ENCODE measurements at regions of chr16 and their contacts with region 1.

Region 1: GRCh38 chr16:81595604-81596292 is 151.1 kb downstream of the CMIP start:
- DNase-seq: no peak
- H3K4me3 Mint-ChIP-seq: no peak overlapping the region
- H3K27ac Mint-ChIP-seq: peak overlapping the region; percentile 87
- H3K4me1 Mint-ChIP-seq: peaks cover 35% of the 10 kb centered on the region
- H3K27me3 Mint-ChIP-seq: no peaks in the 10 kb centered on the region

Region 2: GRCh38 chr16:81521151-81521626 is 74.6 kb before region 1 on chr16:
- intact Hi-C with region 1: loop called (anchors 2 kb)
- DNase-seq: peak; percentile 81
- H3K4me3 Mint-ChIP-seq: peak overlapping the region; percentile 4
- H3K27ac Mint-ChIP-seq: peak overlapping the region; percentile 79
- H3K4me1 Mint-ChIP-seq: peaks cover 60% of the 10 kb centered on the region
- H3K27me3 Mint-ChIP-seq: no peaks in the 10 kb centered on the region

Region 3: GRCh38 chr16:81567987-81568748 is 27.6 kb before region 1 on chr16:
- intact Hi-C with region 1: loop called (anchors 1 kb)
- DNase-seq: no peak
- H3K4me3 Mint-ChIP-seq: peak overlapping the region; percentile 27
- H3K27ac Mint-ChIP-seq: peak overlapping the region; percentile 81
- H3K4me1 Mint-ChIP-seq: peaks cover 20% of the 10 kb centered on the region
- H3K27me3 Mint-ChIP-seq: no peaks in the 10 kb centered on the region

Region 4: DNA sequence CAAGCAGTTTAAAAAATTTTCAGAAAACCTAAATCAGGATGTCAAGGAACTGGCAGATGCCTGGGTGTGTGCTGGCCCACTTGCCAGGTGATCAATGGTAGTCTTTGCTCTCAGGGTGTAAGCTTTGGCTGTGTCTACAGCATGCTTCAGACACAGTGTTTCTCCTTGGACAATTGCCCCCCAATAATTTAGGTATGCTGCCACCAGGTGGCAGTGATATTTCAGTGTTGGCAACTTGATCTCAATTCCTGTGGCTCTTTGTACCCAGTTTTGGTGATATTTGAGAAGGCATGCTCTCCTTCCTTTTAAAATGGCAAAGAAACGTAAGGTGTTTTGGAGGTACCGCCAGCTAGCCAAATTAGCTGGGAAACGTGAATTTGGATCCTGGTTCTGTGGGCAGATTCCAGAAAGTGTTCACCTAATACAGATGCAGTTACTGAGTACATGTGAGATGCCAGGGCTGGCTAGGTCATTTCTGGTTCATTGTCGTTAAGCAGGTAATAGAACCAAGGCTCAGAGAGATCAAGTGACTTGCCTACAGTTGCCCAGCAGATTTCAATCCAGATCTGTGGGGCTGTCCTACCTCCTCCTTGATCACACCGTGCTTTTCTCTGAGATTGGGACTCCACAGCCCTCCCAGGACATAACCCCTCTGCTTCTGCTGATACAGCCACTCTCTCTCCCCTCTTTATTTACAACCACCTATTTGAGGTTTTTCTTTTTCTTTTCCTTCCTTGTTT is 27.8 kb after region 1 on chr16:
- intact Hi-C with region 1: loop called (anchors 1 kb)
- DNase-seq: peak; percentile 42
- H3K4me3 Mint-ChIP-seq: no peak overlapping the region
- H3K27ac Mint-ChIP-seq: peak overlapping the region; percentile 70
- H3K4me1 Mint-ChIP-seq: peaks cover 25% of the 10 kb centered on the region
- H3K27me3 Mint-ChIP-seq: no peaks in the 10 kb centered on the region

Measured in activated T-helper 1 cell treated with anti-CD3 and anti-CD28 coated beads, Interleukin-12 subunit alpha, Interleukin-12 subunit beta, Interleukin-2, Interleukin-4 antibody, amounts not matched to agents 30 ng/mL and 10 ng/mL and 1 ng/mL, durations not matched to agents 14 hours and 24 hours and 36 hours (primary cell).